Activated CD4-positive, alpha-beta T cell treated with anti-CD3 and anti-CD28 coated beads for 36 hours (primary cell): ENCODE measurements at regions of chr2 and their contacts with region 1.

Region 1: DNA sequence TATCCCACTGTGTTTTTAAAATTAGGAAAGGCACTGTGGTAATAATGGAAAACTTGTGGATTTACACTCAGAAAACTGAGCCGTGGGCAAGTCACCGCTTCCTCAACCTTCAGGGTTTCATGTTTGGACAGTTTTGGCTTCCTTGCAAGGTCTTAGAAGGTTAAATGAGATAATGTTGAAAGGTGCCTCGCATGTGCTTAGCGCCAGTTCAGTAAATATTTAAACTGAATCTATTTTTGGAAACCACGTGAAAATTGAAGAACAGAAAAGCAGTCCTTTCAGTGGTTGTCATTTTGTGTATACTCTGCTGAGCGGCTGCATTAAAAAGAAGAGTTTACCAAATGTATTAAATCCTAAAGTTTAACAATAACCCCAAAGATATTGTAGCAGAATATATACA is 15.2 kb upstream of the AGAP1 start:
- DNase-seq: no peak
- ATAC-seq: no peak
- H3K4me3 Mint-ChIP-seq: no peak overlapping the region
- H3K27ac Mint-ChIP-seq: no peak overlapping the region
- H3K4me1 Mint-ChIP-seq: no peaks in the 10 kb centered on the region
- H3K27me3 Mint-ChIP-seq: peaks cover 14% of the 10 kb centered on the region

Region 2: DNA sequence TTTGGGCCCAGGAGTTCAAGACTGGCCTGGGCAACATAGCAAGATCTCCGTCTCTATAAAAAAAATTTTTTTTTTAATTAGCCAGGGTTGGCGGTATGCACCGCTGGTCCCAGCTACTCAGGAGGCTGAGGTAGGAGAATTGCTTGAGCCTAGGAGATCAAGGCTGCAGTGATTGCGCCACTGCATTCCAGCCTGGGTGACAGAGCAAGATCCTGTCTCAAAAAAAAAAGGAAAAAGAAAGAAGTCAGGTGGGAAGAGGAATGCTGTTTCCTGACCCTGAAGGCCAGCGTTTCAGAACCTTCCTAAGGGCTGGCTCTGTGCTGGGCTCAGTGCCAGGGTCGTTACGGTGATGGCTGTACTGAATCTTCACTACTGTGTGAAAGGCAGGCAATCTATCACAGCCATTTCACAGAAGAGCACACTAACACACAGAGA is 19.8 kb before region 1 on chr2:
- CTCF ChIA-PET with region 1: no interaction called
- POLR2A ChIA-PET with region 1: no interaction called
- intact Hi-C with region 1: no loop called
- DNase-seq: no peak
- ATAC-seq: no peak
- H3K4me3 Mint-ChIP-seq: no peak overlapping the region
- H3K27ac Mint-ChIP-seq: no peak overlapping the region
- H3K4me1 Mint-ChIP-seq: no peaks in the 10 kb centered on the region
- H3K27me3 Mint-ChIP-seq: peaks cover 29% of the 10 kb centered on the region

Region 3: GRCh38 chr2:235575904-235576303 is 97.3 kb after region 1 on chr2:
- CTCF ChIA-PET with region 1: no interaction called
- POLR2A ChIA-PET with region 1: no interaction called
- intact Hi-C with region 1: loop called in 1 of 2 experiments (anchors 1 kb)
- DNase-seq: no peak
- ATAC-seq: no peak
- H3K4me3 Mint-ChIP-seq: no peak overlapping the region
- H3K27ac Mint-ChIP-seq: no peak overlapping the region
- H3K4me1 Mint-ChIP-seq: no peaks in the 10 kb centered on the region
- H3K27me3 Mint-ChIP-seq: peaks cover 6% of the 10 kb centered on the region